GM12878 (cell line): ENCODE measurements at regions of chr1 and their contacts with region 1.

Region 1: DNA sequence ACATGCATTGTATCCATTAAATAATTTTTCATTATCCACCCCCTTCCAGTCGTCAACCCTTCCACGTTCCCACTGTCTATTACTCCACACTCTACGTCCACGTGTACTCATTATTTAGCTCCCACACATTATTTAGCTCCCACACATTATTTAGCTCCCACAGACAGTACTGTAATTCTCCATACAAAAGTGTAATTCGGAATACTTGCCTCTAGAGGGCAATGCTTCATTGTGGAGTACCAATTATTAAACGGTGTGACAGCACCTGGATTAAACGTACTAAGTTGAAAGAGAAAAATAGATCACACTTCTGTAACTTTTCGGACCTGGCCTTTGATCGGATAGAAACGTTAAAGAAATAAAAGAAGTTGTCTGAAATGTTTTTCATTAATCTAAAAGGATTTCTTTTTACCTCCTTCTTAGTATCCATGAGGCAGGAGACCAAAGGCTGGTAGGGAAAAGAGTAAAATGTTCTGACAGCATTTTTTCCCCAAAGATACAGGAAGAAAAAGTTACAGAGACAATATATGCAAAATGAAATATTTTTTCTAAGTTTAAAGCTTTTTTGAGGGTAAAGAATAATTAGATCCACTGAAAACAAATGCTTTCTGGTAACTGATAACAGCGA is 99.2 kb downstream of the LHX8 start:
- DNase-seq: peak; percentile 4
- ATAC-seq: peak; percentile 93
- H3K4me3 ChIP-seq: no peak overlapping the region
- H3K27ac ChIP-seq: no peak overlapping the region
- H3K4me1 ChIP-seq: no peaks in the 10 kb centered on the region
- H3K27me3 ChIP-seq: no peaks in the 10 kb centered on the region
- CTCF ChIP-seq: peak; percentile 63 to 68 (median 64)
- EP300 ChIP-seq: no peak
- POLR2A ChIP-seq: no peak
- RAD21 ChIP-seq: peak; percentile 85

Region 2: GRCh38 chr1:74620242-74620641 is 613.2 kb before region 1 on chr1:
- CTCF ChIA-PET with region 1: no interaction called
- POLR2A ChIA-PET with region 1: no interaction called
- RAD21 ChIA-PET with region 1: no interaction called
- SMC1A ChIA-PET with region 1: no interaction called
- in situ Hi-C with region 1: no loop called
- intact Hi-C with region 1: no loop called
- DNase-seq: no peak
- ATAC-seq: no peak
- H3K4me3 ChIP-seq: no peak overlapping the region
- H3K27ac ChIP-seq: no peak overlapping the region
- H3K4me1 ChIP-seq: no peaks in the 10 kb centered on the region
- H3K27me3 ChIP-seq: no peaks in the 10 kb centered on the region
- CTCF ChIP-seq: no peak
- EP300 ChIP-seq: no peak
- POLR2A ChIP-seq: no peak
- RAD21 ChIP-seq: no peak

Region 3: DNA sequence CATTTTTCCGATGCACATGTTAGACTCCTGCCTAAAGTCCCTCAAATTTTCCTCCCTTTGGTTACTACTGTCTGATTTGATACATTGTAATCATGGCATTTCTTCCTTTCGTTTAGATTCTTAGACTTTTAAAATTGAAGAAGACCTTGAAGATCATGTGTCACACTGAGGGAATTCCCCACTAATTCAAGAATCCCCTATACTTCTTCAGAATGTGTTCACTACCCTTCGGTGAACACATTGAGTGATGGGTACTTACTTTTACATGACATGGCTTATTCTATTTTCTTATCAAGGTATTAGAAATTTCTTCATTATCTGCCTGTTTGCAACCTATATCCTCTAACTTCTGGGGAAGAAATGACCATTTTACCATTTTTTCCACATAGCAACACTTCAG is 13.3 kb before region 1 on chr1:
- CTCF ChIA-PET with region 1: interaction called, 12 read pairs
- POLR2A ChIA-PET with region 1: no interaction called
- RAD21 ChIA-PET with region 1: interaction called, 3 read pairs
- SMC1A ChIA-PET with region 1: interaction called, 5 read pairs
- in situ Hi-C with region 1: no loop called
- intact Hi-C with region 1: no loop called
- DNase-seq: no peak
- ATAC-seq: no peak
- H3K4me3 ChIP-seq: no peak overlapping the region
- H3K27ac ChIP-seq: no peak overlapping the region
- H3K4me1 ChIP-seq: no peaks in the 10 kb centered on the region
- H3K27me3 ChIP-seq: no peaks in the 10 kb centered on the region
- CTCF ChIP-seq: no peak
- EP300 ChIP-seq: no peak
- POLR2A ChIP-seq: no peak
- RAD21 ChIP-seq: no peak

Region 4: DNA sequence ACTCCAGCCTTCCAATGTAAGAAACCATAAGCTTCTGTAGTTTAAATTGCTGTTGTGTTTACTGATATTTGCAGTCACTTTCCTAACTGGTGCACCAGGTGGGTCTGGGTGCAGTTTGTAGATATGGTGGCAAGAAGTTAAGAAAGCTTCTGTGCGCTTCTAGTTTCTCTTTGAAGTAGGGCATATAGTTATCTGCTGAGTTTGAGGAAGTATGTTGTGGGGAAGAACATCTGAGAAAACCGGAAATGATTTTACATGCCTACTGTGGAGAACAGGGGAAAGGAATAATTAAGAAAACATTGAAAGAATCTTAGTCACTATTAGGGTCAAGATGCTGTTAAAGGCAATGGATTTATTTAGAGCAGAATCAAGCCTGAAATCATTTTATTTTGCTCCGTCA is 392.4 kb after region 1 on chr1:
- CTCF ChIA-PET with region 1: interaction called, 25 read pairs
- POLR2A ChIA-PET with region 1: no interaction called
- RAD21 ChIA-PET with region 1: interaction called, 6 read pairs
- SMC1A ChIA-PET with region 1: interaction called, 7 read pairs
- in situ Hi-C with region 1: loop called (anchors 10 kb)
- intact Hi-C with region 1: no loop called
- DNase-seq: no peak
- ATAC-seq: no peak
- H3K4me3 ChIP-seq: no peak overlapping the region
- H3K27ac ChIP-seq: no peak overlapping the region
- H3K4me1 ChIP-seq: no peaks in the 10 kb centered on the region
- H3K27me3 ChIP-seq: no peaks in the 10 kb centered on the region
- CTCF ChIP-seq: no peak
- EP300 ChIP-seq: no peak
- POLR2A ChIP-seq: no peak
- RAD21 ChIP-seq: no peak